ENCODE measurements at regions of chr15 and their contacts with region 1.

Region 1: GRCh38 chr15:40108855-40109735 is at the start of gene BMF:
- DNase-seq: peak; percentile 100
- H3K4me3 ChIP-seq: peak within 1 kb of the TSS; percentile 92
- H3K27ac ChIP-seq: peak within 1 kb of the TSS; percentile 50 to 91
- H3K4me1 ChIP-seq: peaks cover 21% of the 10 kb centered on the region
- H3K27me3 ChIP-seq: no peaks in the 10 kb centered on the region
- CTCF ChIP-seq: peak in 2 of 3 donors; percentile 16 to 28
- EP300 ChIP-seq: no peak
- POLR2A ChIP-seq: no peak
- total RNA-seq, gene BMF: 5.7 to 26.5 (median 20.3) TPM

Region 2: GRCh38 chr15:39944726-39945125 is 164.4 kb before region 1 on chr15:
- intact Hi-C with region 1: no loop called
- DNase-seq: no peak
- H3K4me3 ChIP-seq: no peak overlapping the region
- H3K27ac ChIP-seq: peak overlapping the region in 1 of 2 donors; percentile 9
- H3K4me1 ChIP-seq: no peaks in the 10 kb centered on the region
- H3K27me3 ChIP-seq: no peaks in the 10 kb centered on the region
- CTCF ChIP-seq: no peak
- EP300 ChIP-seq: no peak
- POLR2A ChIP-seq: no peak

Region 3: DNA sequence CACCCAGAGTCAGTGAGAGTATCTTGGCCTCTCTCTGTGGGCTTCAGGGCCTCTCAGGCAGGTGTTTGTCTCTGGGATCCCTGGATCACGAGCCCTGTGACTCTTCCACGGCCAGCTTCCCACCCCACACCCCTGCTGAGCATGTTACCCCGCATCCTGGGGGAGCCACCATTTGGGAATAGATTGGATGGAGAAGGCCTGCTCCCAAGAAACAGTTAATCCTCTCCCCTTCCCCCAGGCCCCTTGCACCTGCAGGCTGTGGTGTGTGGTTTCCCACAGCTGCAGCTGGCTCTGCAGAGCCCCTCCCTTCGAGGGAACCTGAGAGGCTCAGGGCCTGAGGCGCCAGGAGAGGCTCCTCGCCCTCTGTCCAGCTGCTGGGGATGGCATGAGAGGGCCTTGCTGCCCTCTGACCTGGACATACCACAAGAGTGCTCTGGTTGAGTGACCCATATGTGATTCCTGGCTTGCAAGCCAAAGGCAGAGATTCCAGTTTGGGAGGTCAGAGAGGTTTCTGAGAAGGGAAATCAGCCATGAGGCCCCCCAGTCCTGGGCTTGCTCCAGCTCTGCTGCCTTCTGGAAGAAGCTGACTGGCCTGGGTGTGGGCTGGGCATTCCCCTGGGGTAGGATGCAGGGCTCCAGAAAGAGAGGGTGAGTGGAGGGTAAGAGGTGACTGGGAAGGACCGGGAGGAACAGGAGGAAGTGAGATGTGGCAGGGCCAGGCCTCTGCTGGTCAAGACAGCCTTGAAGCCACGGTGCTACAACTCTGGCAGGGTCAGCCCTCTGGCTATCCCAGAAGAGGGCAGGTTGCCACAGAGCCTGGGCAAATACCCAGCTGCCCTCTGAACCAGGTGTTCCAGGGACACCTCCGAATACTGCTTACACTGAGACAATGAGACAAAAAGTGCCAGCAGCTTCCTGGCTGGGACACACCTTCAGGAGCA is 54.2 kb before region 1 on chr15:
- intact Hi-C with region 1: loop called in 1 of 4 experiments (anchors 10 kb)
- DNase-seq: no peak
- H3K4me3 ChIP-seq: no peak overlapping the region
- H3K27ac ChIP-seq: no peak overlapping the region
- H3K4me1 ChIP-seq: peaks cover 9% of the 10 kb centered on the region
- H3K27me3 ChIP-seq: no peaks in the 10 kb centered on the region
- CTCF ChIP-seq: no peak
- EP300 ChIP-seq: no peak
- POLR2A ChIP-seq: no peak

Region 4: GRCh38 chr15:40069178-40070165 is 39.6 kb before region 1 on chr15:
- intact Hi-C with region 1: loop called in 1 of 4 experiments (anchors 5 kb)
- DNase-seq: peak; percentile 65 to 86 (median 72)
- H3K4me3 ChIP-seq: no peak overlapping the region
- H3K27ac ChIP-seq: peak overlapping the region; percentile 39 to 74
- H3K4me1 ChIP-seq: peaks cover 8% of the 10 kb centered on the region
- H3K27me3 ChIP-seq: no peaks in the 10 kb centered on the region
- CTCF ChIP-seq: no peak
- EP300 ChIP-seq: no peak
- POLR2A ChIP-seq: no peak

Region 5: DNA sequence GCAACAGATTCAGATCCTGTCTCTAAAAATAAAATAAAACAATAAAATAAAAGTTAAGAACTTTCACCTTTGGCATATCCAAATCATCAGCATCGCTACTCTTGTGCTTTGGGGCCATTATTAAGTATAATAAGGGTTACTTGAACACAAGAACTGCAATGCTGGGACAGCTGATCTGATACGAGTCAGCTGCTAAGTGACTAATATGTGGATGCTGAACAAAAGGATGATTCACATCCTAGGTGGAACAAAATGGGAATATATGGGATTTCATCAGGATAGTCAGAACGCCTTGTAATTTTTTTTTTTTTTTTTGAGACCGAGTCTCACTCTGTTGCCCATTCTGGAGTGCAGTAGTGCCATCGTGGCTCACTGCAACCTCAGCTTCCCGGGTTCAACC is 81.5 kb after region 1 on chr15:
- intact Hi-C with region 1: no loop called
- DNase-seq: no peak
- H3K4me3 ChIP-seq: no peak overlapping the region
- H3K27ac ChIP-seq: no peak overlapping the region
- H3K4me1 ChIP-seq: no peaks in the 10 kb centered on the region
- H3K27me3 ChIP-seq: no peaks in the 10 kb centered on the region
- CTCF ChIP-seq: no peak
- EP300 ChIP-seq: no peak
- POLR2A ChIP-seq: no peak

Region 6: GRCh38 chr15:40274350-40275274 is 165.5 kb after region 1 on chr15:
- intact Hi-C with region 1: loop called in 1 of 4 experiments (anchors 5 kb)
- DNase-seq: peak; percentile 70 to 87 (median 84)
- H3K4me3 ChIP-seq: no peak overlapping the region
- H3K27ac ChIP-seq: no peak overlapping the region
- H3K4me1 ChIP-seq: peaks cover 3% of the 10 kb centered on the region
- H3K27me3 ChIP-seq: no peaks in the 10 kb centered on the region
- CTCF ChIP-seq: peak; percentile 99 to 100 (median 99)
- EP300 ChIP-seq: no peak
- POLR2A ChIP-seq: peak; percentile 12

Region 7: DNA sequence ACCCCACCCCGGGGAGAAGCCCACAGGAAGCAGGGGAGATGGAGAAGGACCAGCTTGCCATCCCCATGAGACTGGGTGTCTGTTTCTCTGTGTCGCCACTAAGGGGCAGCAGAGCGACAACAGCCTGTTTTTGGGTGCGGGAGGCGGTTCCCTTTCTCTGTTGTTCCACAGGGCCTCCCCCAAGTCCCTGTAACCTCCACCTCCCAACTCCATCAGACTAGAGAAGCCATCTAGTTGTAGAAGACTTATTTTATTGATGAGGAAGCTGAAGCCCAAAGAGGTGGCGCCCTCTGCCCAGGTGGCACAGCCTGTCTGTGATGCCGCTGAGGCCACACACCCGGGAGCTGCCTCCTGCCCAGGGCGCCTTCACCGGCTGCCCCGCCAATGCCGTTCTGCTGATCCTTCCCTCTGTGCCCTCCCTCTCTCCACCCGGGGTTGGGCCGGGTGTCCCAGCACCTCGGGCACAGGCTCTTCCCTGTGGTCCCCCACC is 235.6 kb after region 1 on chr15:
- intact Hi-C with region 1: loop called in 1 of 4 experiments (anchors 10 kb)
- DNase-seq: peak in 4 of 5 donors; percentile 49 to 75 (median 60)
- H3K4me3 ChIP-seq: no peak overlapping the region
- H3K27ac ChIP-seq: no peak overlapping the region
- H3K4me1 ChIP-seq: peaks cover 12% of the 10 kb centered on the region
- H3K27me3 ChIP-seq: no peaks in the 10 kb centered on the region
- CTCF ChIP-seq: peak; percentile 39 to 62 (median 57)
- EP300 ChIP-seq: no peak
- POLR2A ChIP-seq: no peak

Measured in ovary (tissue), 10 donors.